Transverse colon (tissue), 4 donors: ENCODE measurements at regions of chr18 and their contacts with region 1.

Region 1: GRCh38 chr18:55234366-55235093 is 275.3 kb upstream of the CCDC68 start:
- DNase-seq: peak; percentile 78
- H3K4me3 ChIP-seq: no peak overlapping the region
- H3K27ac ChIP-seq: peak overlapping the region; percentile 1 to 15 (median 2)
- H3K4me1 ChIP-seq: peaks cover 0 to 5% (median 0%) of the 10 kb centered on the region in 4 donors
- H3K27me3 ChIP-seq: no peaks in the 10 kb centered on the region
- CTCF ChIP-seq: peak; percentile 66 to 81 (median 70)
- EP300 ChIP-seq: no peak
- POLR2A ChIP-seq: no peak

Region 2: GRCh38 chr18:55189972-55190371 is 44.6 kb before region 1 on chr18:
- in situ Hi-C with region 1: no loop called
- intact Hi-C with region 1: no loop called
- DNase-seq: no peak
- H3K4me3 ChIP-seq: no peak overlapping the region
- H3K27ac ChIP-seq: no peak overlapping the region
- H3K4me1 ChIP-seq: no peaks in the 10 kb centered on the region
- H3K27me3 ChIP-seq: no peaks in the 10 kb centered on the region
- CTCF ChIP-seq: no peak
- EP300 ChIP-seq: no peak
- POLR2A ChIP-seq: no peak

Region 3: GRCh38 chr18:55275039-55275901 is 40.7 kb after region 1 on chr18:
- in situ Hi-C with region 1: no loop called
- intact Hi-C with region 1: no loop called
- DNase-seq: no peak
- H3K4me3 ChIP-seq: no peak overlapping the region
- H3K27ac ChIP-seq: no peak overlapping the region
- H3K4me1 ChIP-seq: peaks cover 0 to 4% (median 0%) of the 10 kb centered on the region in 4 donors
- H3K27me3 ChIP-seq: no peaks in the 10 kb centered on the region
- CTCF ChIP-seq: peak in 2 of 5 experiments; percentile 15 to 17
- EP300 ChIP-seq: no peak
- POLR2A ChIP-seq: no peak

Region 4: DNA sequence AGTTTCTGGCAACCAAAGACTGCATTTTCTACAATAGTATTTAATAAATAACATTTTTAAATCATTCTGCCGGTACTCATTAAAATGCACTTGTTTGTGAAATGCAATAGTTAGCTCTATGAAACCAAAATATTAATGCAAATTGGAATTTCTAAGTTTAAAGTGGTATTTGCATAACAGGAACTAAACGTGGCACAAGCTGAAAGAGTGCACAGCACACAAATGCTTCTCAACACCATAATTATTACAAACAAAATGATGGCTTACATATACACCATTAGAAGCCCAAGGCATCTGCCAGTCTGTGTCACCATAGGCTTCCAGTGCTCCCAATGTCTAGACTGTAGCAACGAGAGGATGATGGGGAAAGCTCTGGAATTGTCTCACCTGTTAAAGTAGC is 73.0 kb after region 1 on chr18:
- in situ Hi-C with region 1: no loop called
- intact Hi-C with region 1: no loop called
- DNase-seq: no peak
- H3K4me3 ChIP-seq: no peak overlapping the region
- H3K27ac ChIP-seq: peak overlapping the region in 1 of 4 donors; percentile 23
- H3K4me1 ChIP-seq: peaks cover 0 to 10% (median 4%) of the 10 kb centered on the region in 4 donors
- H3K27me3 ChIP-seq: no peaks in the 10 kb centered on the region
- CTCF ChIP-seq: no peak
- EP300 ChIP-seq: no peak
- POLR2A ChIP-seq: no peak

Region 5: GRCh38 chr18:55781481-55781957 is 547.0 kb after region 1 on chr18:
- in situ Hi-C with region 1: loop called in 3 of 4 experiments (anchors 10 to 25 kb)
- intact Hi-C with region 1: loop called (anchors 5 kb)
- DNase-seq: peak; percentile 10
- H3K4me3 ChIP-seq: no peak overlapping the region
- H3K27ac ChIP-seq: no peak overlapping the region
- H3K4me1 ChIP-seq: peaks cover 0 to 7% (median 0%) of the 10 kb centered on the region in 4 donors
- H3K27me3 ChIP-seq: peaks cover 12% of the 10 kb centered on the region
- CTCF ChIP-seq: peak in 4 of 5 experiments; percentile 29 to 43 (median 31)
- EP300 ChIP-seq: no peak
- POLR2A ChIP-seq: no peak